MCF 10A (cell line): ENCODE measurements at regions of chr3 and their contacts with region 1.

Region 1: GRCh38 chr3:14508961-14509795 is 31.0 kb downstream of the GRIP2 start:
- DNase-seq: peak; percentile 56
- H3K4me3 Mint-ChIP-seq: no peak overlapping the region
- H3K27ac Mint-ChIP-seq: no peak overlapping the region
- H3K4me1 Mint-ChIP-seq: no peaks in the 10 kb centered on the region
- H3K27me3 Mint-ChIP-seq: no peaks in the 10 kb centered on the region
- CTCF ChIP-seq: peak; percentile 96

Region 2: GRCh38 chr3:14431892-14432834 is 77.0 kb before region 1 on chr3:
- CTCF ChIA-PET with region 1: no interaction called
- POLR2A ChIA-PET with region 1: no interaction called
- intact Hi-C with region 1: no loop called
- DNase-seq: peak; percentile 82
- H3K4me3 Mint-ChIP-seq: no peak overlapping the region
- H3K27ac Mint-ChIP-seq: peak overlapping the region; percentile 76
- H3K4me1 Mint-ChIP-seq: peaks cover 39% of the 10 kb centered on the region
- H3K27me3 Mint-ChIP-seq: no peaks in the 10 kb centered on the region
- CTCF ChIP-seq: no peak

Region 3: GRCh38 chr3:14520149-14520548 is 11.0 kb after region 1 on chr3:
- CTCF ChIA-PET with region 1: interaction called, 27 read pairs
- POLR2A ChIA-PET with region 1: no interaction called
- intact Hi-C with region 1: no loop called
- DNase-seq: no peak
- H3K4me3 Mint-ChIP-seq: no peak overlapping the region
- H3K27ac Mint-ChIP-seq: no peak overlapping the region
- H3K4me1 Mint-ChIP-seq: no peaks in the 10 kb centered on the region
- H3K27me3 Mint-ChIP-seq: peaks cover 25% of the 10 kb centered on the region
- CTCF ChIP-seq: no peak

Region 4: GRCh38 chr3:14531856-14532395 is 22.7 kb after region 1 on chr3:
- CTCF ChIA-PET with region 1: interaction called, 13 read pairs
- POLR2A ChIA-PET with region 1: no interaction called
- intact Hi-C with region 1: no loop called
- DNase-seq: no peak
- H3K4me3 Mint-ChIP-seq: no peak overlapping the region
- H3K27ac Mint-ChIP-seq: no peak overlapping the region
- H3K4me1 Mint-ChIP-seq: peaks cover 5% of the 10 kb centered on the region
- H3K27me3 Mint-ChIP-seq: peaks cover 16% of the 10 kb centered on the region
- CTCF ChIP-seq: no peak

Region 5: DNA sequence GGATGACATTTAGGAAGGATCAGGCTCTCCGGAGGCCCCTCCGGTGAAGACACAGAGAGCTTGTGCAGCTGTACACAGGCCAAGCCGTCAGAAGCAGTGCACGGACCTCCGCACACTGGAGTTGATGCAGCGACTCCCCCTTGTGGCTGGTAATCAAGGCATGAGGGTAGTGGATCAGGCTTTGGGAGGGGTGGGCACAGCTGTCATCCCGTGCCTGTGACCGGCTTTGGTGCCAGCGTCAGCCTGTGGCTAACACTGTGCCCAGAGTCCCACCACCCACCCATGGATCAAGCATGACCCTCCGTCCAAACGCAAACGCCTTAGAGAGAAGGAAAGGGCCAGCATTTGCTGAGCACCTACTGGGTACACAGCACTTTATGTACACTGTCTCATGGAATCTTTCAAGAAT is 39.1 kb after region 1 on chr3:
- CTCF ChIA-PET with region 1: interaction called, 9 read pairs
- POLR2A ChIA-PET with region 1: no interaction called
- intact Hi-C with region 1: loop called (anchors 1 kb)
- DNase-seq: peak; percentile 66
- H3K4me3 Mint-ChIP-seq: no peak overlapping the region
- H3K27ac Mint-ChIP-seq: no peak overlapping the region
- H3K4me1 Mint-ChIP-seq: peaks cover 13% of the 10 kb centered on the region
- H3K27me3 Mint-ChIP-seq: peaks cover 17% of the 10 kb centered on the region
- CTCF ChIP-seq: peak; percentile 53

Region 6: GRCh38 chr3:14780927-14781507 is 271.8 kb after region 1 on chr3:
- CTCF ChIA-PET with region 1: no interaction called
- POLR2A ChIA-PET with region 1: no interaction called
- intact Hi-C with region 1: loop called (anchors 10 kb)
- DNase-seq: peak; percentile 38
- H3K4me3 Mint-ChIP-seq: no peak overlapping the region
- H3K27ac Mint-ChIP-seq: no peak overlapping the region
- H3K4me1 Mint-ChIP-seq: no peaks in the 10 kb centered on the region
- H3K27me3 Mint-ChIP-seq: peaks cover 9% of the 10 kb centered on the region
- CTCF ChIP-seq: peak; percentile 10